Sciatic nerve (tissue), 2 donors: ENCODE measurements at regions of chr4 and their contacts with region 1.

Region 1: DNA sequence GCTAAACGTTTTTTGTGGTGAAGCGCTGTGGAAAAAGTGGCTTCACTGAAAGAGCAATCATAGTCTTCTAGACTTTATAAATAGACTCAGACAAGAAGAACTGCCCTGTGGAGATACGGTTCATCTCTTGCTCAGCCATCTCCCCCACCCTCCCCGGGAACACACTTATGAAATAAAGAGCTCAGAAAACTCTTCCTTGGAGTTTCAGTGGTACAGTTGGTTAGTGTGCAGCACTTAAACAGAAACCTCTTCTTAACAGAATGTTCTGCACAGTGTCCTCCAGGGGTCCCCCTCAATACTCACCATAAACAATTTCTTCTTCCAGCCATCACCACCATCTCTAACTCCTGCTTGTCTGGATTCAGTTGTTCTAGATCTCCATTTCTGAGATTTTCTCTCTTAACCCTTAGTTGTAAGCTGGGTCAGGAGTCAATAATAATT is 313.0 kb downstream of the ARHGAP10 start:
- DNase-seq: no peak
- ATAC-seq: peak; percentile 61

Region 2: GRCh38 chr4:148056869-148057268 is 11.9 kb after region 1 on chr4:
- intact Hi-C with region 1: no loop called
- DNase-seq: peak; percentile 76
- ATAC-seq: peak; percentile 68

Region 3: GRCh38 chr4:149403081-149403480 is 1358.1 kb after region 1 on chr4:
- intact Hi-C with region 1: loop called (anchors 5 kb)
- DNase-seq: no peak
- ATAC-seq: no peak